Prostate gland (tissue), 2 donors: ENCODE measurements at regions of chr18 and their contacts with region 1.

Region 1: DNA sequence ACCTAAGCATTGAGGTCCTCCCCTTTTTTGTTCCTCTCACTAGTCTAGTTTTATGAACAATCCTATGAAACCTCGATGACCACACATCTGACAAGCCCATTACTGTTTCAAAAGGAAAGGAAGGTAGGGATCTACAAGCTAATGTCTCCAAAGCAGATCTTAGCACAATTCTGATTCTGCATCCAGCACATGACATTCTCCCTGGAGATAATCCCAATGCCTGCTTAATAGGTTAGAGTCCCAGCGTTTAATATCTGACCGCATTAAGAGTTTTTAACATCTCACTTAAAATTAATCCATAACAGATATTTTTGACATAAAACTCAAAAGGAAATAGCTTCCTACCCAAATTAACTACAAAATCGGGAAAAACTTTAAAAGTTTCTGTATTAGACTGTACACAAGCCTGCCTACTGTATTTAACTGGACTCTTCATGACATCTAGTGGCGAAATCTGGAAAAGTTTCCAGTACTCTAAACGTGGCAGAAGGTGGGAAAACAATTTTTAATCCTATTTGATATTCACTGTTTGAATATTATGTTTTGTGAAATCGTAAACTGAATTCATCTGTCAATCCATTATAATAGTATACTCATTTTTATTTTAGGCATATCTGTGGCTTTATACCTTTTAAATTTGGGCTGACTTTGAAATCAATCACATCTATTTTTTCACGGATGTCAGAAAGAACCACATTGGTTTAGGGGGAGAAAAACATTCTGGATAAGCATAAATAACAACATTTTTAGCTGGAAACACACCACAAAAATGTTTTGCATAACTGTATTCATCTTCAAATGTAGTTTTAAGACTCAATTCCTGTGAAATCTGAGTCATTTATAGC is 62.4 kb downstream of the TXNL1 start:
- DNase-seq: no peak
- H3K4me3 ChIP-seq: no peak overlapping the region
- H3K27ac ChIP-seq: no peak overlapping the region
- H3K4me1 ChIP-seq: no peaks in the 10 kb centered on the region
- H3K27me3 ChIP-seq: no peaks in the 10 kb centered on the region
- CTCF ChIP-seq: peak; percentile 26 to 82 (median 72)
- POLR2A ChIP-seq: no peak

Region 2: DNA sequence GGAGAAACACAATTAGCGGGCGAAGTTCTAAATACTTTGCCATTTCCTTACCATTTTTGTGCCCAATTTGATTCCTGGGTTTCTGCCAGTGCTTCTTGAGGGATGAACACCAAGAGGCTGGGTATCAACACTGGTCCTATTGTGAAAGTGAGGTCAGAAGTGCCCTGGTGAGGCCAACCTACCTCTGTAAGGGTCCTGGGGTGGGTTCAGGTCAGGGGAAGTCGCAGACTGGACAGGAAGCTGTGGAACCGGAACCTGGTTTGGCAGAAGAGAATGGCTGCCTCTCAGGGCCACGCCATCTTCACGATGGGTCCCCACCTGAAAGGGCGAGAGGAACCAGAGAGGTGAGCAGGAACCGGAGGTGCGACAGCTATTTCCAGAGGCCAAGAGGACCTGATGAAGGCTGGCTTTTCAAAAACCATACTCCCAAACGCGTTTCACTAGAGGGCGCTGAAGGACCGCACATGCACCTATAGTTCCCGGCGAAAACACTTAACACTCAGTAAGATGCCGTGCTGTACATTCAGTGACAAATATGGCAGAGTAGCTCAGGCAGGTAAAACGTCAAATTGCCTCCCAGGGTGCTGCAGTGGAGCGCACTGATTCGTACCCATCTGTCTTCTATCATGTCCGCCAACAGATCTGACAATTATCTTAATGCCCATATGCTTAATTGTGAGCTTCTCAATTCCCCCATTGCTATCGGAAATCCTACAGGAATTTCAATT is 1341.5 kb before region 1 on chr18:
- intact Hi-C with region 1: loop called (anchors 2 kb)
- DNase-seq: peak; percentile 80
- H3K4me3 ChIP-seq: no peak overlapping the region
- H3K27ac ChIP-seq: no peak overlapping the region
- H3K4me1 ChIP-seq: no peaks in the 10 kb centered on the region
- H3K27me3 ChIP-seq: no peaks in the 10 kb centered on the region
- CTCF ChIP-seq: peak; percentile 23 to 77 (median 70)
- POLR2A ChIP-seq: no peak

Region 3: GRCh38 chr18:55343396-55344073 is 1232.5 kb before region 1 on chr18:
- intact Hi-C with region 1: loop called (anchors 10 kb)
- DNase-seq: no peak
- H3K4me3 ChIP-seq: no peak overlapping the region
- H3K27ac ChIP-seq: no peak overlapping the region
- H3K4me1 ChIP-seq: no peaks in the 10 kb centered on the region
- H3K27me3 ChIP-seq: no peaks in the 10 kb centered on the region
- CTCF ChIP-seq: peak in 3 of 4 experiments; percentile 27 to 57 (median 50)
- POLR2A ChIP-seq: no peak

Region 4: GRCh38 chr18:56501896-56502295 is 74.1 kb before region 1 on chr18:
- intact Hi-C with region 1: no loop called
- DNase-seq: peak; percentile 7
- H3K4me3 ChIP-seq: no peak overlapping the region
- H3K27ac ChIP-seq: no peak overlapping the region
- H3K4me1 ChIP-seq: no peaks in the 10 kb centered on the region
- H3K27me3 ChIP-seq: no peaks in the 10 kb centered on the region
- CTCF ChIP-seq: no peak
- POLR2A ChIP-seq: no peak

Region 5: GRCh38 chr18:56627991-56628390 is 52.0 kb after region 1 on chr18:
- intact Hi-C with region 1: no loop called
- DNase-seq: no peak
- H3K4me3 ChIP-seq: no peak overlapping the region
- H3K27ac ChIP-seq: no peak overlapping the region
- H3K4me1 ChIP-seq: no peaks in the 10 kb centered on the region
- H3K27me3 ChIP-seq: no peaks in the 10 kb centered on the region
- CTCF ChIP-seq: no peak
- POLR2A ChIP-seq: no peak

Region 6: GRCh38 chr18:56696966-56697365 is 120.9 kb after region 1 on chr18:
- intact Hi-C with region 1: no loop called
- DNase-seq: no peak
- H3K4me3 ChIP-seq: no peak overlapping the region
- H3K27ac ChIP-seq: no peak overlapping the region
- H3K4me1 ChIP-seq: no peaks in the 10 kb centered on the region
- H3K27me3 ChIP-seq: no peaks in the 10 kb centered on the region
- CTCF ChIP-seq: no peak
- POLR2A ChIP-seq: no peak

Region 7: GRCh38 chr18:56727399-56727798 is 151.4 kb after region 1 on chr18:
- intact Hi-C with region 1: no loop called
- DNase-seq: no peak
- H3K4me3 ChIP-seq: no peak overlapping the region
- H3K27ac ChIP-seq: no peak overlapping the region
- H3K4me1 ChIP-seq: no peaks in the 10 kb centered on the region
- H3K27me3 ChIP-seq: no peaks in the 10 kb centered on the region
- CTCF ChIP-seq: no peak
- POLR2A ChIP-seq: no peak